Activated CD4-positive, alpha-beta memory T cell treated with anti-CD3 and anti-CD28 coated beads for 36 hours (primary cell): ENCODE measurements at regions of chr9 and their contacts with region 1.

Region 1: GRCh38 chr9:121322037-121322775 is 47.8 kb downstream of the STOM start:
- DNase-seq: no peak
- H3K4me3 Mint-ChIP-seq: no peak overlapping the region
- H3K27ac Mint-ChIP-seq: no peak overlapping the region
- H3K4me1 Mint-ChIP-seq: peaks cover 14% of the 10 kb centered on the region
- H3K27me3 Mint-ChIP-seq: no peaks in the 10 kb centered on the region

Region 2: GRCh38 chr9:121305269-121305994 is 16.8 kb before region 1 on chr9:
- CTCF ChIA-PET with region 1: interaction called, 18 read pairs
- POLR2A ChIA-PET with region 1: no interaction called
- intact Hi-C with region 1: no loop called
- DNase-seq: no peak
- H3K4me3 Mint-ChIP-seq: no peak overlapping the region
- H3K27ac Mint-ChIP-seq: no peak overlapping the region
- H3K4me1 Mint-ChIP-seq: peaks cover under 1% of the 10 kb centered on the region
- H3K27me3 Mint-ChIP-seq: peaks cover 4% of the 10 kb centered on the region

Region 3: GRCh38 chr9:121350993-121351561 is 28.9 kb after region 1 on chr9:
- CTCF ChIA-PET with region 1: interaction called, 46 read pairs
- POLR2A ChIA-PET with region 1: no interaction called
- intact Hi-C with region 1: loop called (anchors 2 kb)
- DNase-seq: peak; percentile 29
- H3K4me3 Mint-ChIP-seq: no peak overlapping the region
- H3K27ac Mint-ChIP-seq: no peak overlapping the region
- H3K4me1 Mint-ChIP-seq: peaks cover 31% of the 10 kb centered on the region
- H3K27me3 Mint-ChIP-seq: no peaks in the 10 kb centered on the region

Region 4: DNA sequence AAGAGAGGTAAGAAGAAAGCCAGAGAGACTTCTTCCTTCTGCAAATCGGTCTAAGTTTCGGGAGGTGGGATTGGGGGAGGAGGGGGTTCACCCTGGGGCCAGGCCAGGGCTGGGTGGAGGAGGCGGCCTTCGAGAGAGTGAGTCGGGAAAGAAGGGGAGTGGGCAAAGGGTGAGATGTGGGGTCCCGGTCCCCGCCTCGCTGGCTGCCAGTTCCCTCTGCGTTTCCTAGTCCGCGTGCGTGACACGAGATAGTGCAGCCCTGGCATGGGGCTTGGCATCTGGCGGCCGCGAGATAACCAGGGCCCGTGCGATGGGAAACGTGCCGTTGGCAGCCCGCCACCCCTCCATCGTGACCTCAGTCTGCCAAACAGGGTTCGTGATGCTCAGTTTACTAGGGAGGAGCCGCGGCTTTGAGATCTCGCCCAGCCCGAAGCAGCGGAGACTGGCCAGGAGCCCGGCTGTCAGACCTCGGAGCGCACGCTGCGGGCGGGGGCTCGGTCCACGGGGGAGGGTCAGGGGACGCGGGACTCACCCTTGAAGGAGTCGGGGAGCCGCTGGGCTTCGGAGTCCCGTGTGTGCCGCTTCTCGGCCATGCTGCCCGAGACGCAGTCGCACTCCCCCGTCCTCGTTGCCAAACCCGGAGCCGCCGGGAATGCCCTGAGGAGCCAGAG is 47.5 kb after region 1 on chr9 and contains the start of gene STOM:
- CTCF ChIA-PET with region 1: interaction called, 88 read pairs
- POLR2A ChIA-PET with region 1: no interaction called
- intact Hi-C with region 1: no loop called
- DNase-seq: peak; percentile 79
- H3K4me3 Mint-ChIP-seq: peak within 1 kb of the TSS; percentile 93
- H3K27ac Mint-ChIP-seq: peak within 1 kb of the TSS; percentile 99
- H3K4me1 Mint-ChIP-seq: peaks cover 58% of the 10 kb centered on the region
- H3K27me3 Mint-ChIP-seq: no peaks in the 10 kb centered on the region
- total RNA-seq, gene STOM: 49.8 to 51.9 TPM

Region 5: DNA sequence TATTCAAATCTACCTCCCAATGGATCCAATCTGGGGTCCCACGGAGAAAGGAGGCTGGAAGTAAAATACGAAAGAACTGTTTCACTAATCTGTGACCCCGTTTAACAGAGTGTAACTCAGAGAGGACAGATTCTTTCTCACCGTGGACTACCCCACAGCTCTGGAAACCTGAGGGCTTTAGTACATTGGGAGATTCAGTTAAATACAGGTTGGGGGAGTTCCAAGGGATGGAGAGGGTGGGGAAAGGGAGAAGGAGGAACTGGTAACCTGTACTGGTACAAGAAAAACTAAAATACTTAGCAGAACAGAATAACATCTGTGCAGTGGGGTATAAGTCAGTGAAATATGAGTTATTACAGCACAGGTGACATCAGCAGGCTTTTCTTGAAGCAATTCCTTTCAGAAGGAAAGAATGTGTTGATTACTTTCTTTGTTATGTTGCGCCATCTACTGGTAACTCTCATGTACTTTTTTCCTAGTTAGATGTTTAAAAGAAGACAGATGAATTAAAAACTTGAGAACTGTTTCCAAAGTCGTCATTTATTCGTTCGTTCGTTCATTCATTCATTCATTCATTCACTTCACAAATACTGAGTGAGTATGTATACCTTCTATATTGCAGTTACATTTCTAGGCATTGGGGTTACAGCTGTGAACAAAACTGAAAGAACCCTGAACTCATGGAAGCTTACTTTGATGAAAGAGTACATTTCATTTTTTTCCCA is 77.8 kb after region 1 on chr9:
- CTCF ChIA-PET with region 1: interaction called, 486 read pairs
- POLR2A ChIA-PET with region 1: no interaction called
- intact Hi-C with region 1: loop called (anchors 1 kb)
- DNase-seq: no peak
- H3K4me3 Mint-ChIP-seq: no peak overlapping the region
- H3K27ac Mint-ChIP-seq: no peak overlapping the region
- H3K4me1 Mint-ChIP-seq: no peaks in the 10 kb centered on the region
- H3K27me3 Mint-ChIP-seq: peaks cover 3% of the 10 kb centered on the region